MCF 10A (cell line): ENCODE measurements at regions of chr1 and their contacts with region 1.

Region 1: GRCh38 chr1:21534674-21535378 is 25.6 kb downstream of the ALPL start:
- DNase-seq: peak; percentile 63
- H3K4me3 Mint-ChIP-seq: no peak overlapping the region
- H3K27ac Mint-ChIP-seq: no peak overlapping the region
- H3K4me1 Mint-ChIP-seq: no peaks in the 10 kb centered on the region
- H3K27me3 Mint-ChIP-seq: peaks cover 32% of the 10 kb centered on the region
- CTCF ChIP-seq: peak; percentile 49

Region 2: GRCh38 chr1:20426923-20427322 is 1107.9 kb before region 1 on chr1:
- CTCF ChIA-PET with region 1: no interaction called
- POLR2A ChIA-PET with region 1: no interaction called
- intact Hi-C with region 1: no loop called
- DNase-seq: peak; percentile 68
- H3K4me3 Mint-ChIP-seq: no peak overlapping the region
- H3K27ac Mint-ChIP-seq: no peak overlapping the region
- H3K4me1 Mint-ChIP-seq: peaks cover 7% of the 10 kb centered on the region
- H3K27me3 Mint-ChIP-seq: no peaks in the 10 kb centered on the region
- CTCF ChIP-seq: no peak

Region 3: DNA sequence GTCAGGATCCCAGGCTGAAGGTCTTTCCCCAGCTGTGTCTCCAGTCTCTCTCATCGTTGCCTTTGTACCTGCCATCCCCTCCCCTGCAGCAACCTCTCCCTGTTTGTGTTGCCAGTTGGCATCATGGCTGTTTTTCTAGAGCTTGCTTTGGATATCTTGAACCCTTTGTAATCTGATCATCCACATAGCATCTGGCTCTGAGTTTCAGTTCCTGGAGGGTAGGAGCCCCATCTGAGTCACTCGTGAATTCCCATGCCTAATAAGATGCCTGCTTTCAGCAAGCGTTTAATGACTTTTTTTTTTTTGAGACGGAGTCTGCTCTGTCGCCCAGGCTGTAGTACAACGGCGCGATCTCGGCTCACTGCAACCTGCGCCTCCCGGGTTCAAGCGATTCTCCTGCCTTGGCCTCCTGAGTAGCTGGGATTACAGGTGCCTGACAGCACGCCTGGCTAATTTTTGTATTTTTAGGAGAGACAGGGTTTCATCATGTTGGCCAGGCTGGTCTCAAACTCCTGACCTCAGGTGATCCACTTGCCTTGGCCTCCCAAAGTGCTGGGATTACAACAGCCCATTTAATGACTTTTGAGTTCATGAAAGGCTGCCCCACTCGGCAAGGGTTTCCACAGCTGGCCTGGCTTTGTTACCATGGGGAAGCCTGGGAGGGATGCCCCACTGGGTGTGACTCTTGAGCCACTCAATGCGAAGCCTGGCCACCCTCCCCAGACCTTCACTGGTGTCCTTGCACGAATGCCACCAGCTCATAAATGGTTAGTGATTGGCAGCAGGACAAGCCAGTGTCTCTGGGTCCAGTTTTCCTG is 13.7 kb before region 1 on chr1:
- CTCF ChIA-PET with region 1: interaction called, 10 read pairs
- POLR2A ChIA-PET with region 1: no interaction called
- intact Hi-C with region 1: no loop called
- DNase-seq: no peak
- H3K4me3 Mint-ChIP-seq: no peak overlapping the region
- H3K27ac Mint-ChIP-seq: no peak overlapping the region
- H3K4me1 Mint-ChIP-seq: no peaks in the 10 kb centered on the region
- H3K27me3 Mint-ChIP-seq: no peaks in the 10 kb centered on the region
- CTCF ChIP-seq: no peak